Sciatic nerve (tissue), 2 donors: ENCODE measurements at regions of chr6 and their contacts with region 1.

Region 1: GRCh38 chr6:110882271-110882613 is 7.7 kb downstream of the AMD1 start:
- DNase-seq: no peak
- ATAC-seq: no peak

Region 2: GRCh38 chr6:110714143-110714542 is 168.1 kb before region 1 on chr6:
- intact Hi-C with region 1: loop called (anchors 10 kb)
- DNase-seq: no peak
- ATAC-seq: no peak

Region 3: DNA sequence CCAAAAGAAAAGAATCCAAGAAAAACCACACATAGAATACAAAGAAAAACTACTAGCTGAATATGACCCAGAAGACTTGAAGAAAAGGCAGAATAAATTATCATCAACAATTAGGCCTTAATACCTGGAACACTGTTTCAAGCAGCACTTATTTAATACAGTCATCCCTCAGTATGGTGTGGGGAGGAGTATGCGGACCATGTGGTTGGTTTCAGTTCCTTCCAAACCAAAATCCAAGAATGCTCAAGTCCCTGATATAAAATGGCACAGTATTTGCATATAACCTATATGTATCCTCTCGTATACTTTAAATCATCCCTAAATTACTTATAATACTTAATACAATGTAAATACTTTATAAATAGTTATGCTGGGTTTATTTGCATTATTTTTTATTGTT is 83.1 kb before region 1 on chr6:
- intact Hi-C with region 1: no loop called
- DNase-seq: no peak
- ATAC-seq: no peak